Heart right ventricle (tissue), 16 donors: ENCODE measurements at regions of chr12 and their contacts with region 1.

Region 1: GRCh38 chr12:78787576-78787975 is 77.0 kb upstream of the SYT1 start:
- DNase-seq: no peak
- ATAC-seq: no peak
- H3K4me3 ChIP-seq: no peak overlapping the region
- H3K27ac ChIP-seq: no peak overlapping the region
- H3K4me1 ChIP-seq: no peaks in the 10 kb centered on the region
- H3K27me3 ChIP-seq: no peaks in the 10 kb centered on the region
- CTCF ChIP-seq: no peak

Region 2: DNA sequence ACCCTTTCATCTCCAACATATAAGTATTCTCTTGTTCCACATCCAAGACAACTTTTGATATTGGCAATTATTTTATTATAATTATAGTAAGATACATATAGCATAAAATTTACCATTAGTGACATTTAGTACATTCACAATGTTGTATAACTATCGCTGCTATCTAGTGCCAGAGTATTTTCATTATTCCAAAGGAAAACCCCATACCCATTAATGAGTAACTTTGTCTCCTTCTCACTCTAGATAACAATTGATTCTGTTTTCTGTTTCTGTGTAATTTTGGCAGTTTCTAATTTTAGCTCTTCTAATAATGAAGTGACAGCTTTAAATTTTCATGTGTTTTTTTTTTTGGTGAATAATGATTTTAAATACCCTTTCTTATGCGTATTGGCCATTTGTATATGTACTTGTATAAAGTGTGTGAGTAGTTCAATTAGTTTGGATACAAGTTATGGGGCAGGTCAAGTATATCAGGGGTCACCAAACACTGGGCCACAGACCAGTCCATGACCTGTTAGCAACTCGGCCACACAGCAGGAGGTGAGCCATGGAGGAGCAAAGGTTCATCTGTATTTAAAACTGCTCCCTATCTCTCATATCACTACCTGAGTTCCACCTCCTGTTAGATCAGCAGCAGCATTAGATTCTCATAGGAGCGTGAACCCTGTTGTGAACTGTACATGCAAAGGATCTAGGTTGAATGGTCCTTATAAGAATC is 20.2 kb before region 1 on chr12:
- intact Hi-C with region 1: loop called in 1 of 10 experiments (anchors 1 kb)
- DNase-seq: no peak
- ATAC-seq: no peak
- H3K4me3 ChIP-seq: no peak overlapping the region
- H3K27ac ChIP-seq: no peak overlapping the region
- H3K4me1 ChIP-seq: no peaks in the 10 kb centered on the region
- H3K27me3 ChIP-seq: no peaks in the 10 kb centered on the region
- CTCF ChIP-seq: no peak

Region 3: DNA sequence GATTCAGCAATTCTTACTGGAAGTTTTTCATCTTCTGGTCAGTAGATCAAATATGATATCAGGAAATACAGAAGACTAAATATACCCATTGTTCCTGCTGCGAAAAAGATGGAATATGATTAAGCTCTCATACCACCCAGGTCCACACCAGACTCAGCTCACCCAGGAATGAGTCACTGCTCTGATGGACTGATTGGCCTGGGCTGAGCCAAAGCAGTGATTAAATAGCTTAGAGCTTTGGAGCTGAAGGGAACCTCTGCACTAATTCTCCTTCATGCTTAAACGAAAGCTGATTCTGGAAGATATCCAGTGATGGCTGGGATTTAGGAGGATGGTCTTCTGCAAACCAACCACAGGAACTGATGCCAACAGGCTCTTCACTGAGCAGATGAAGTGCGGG is 15.0 kb after region 1 on chr12:
- intact Hi-C with region 1: no loop called
- DNase-seq: no peak
- ATAC-seq: no peak
- H3K4me3 ChIP-seq: no peak overlapping the region
- H3K27ac ChIP-seq: no peak overlapping the region
- H3K4me1 ChIP-seq: no peaks in the 10 kb centered on the region
- H3K27me3 ChIP-seq: no peaks in the 10 kb centered on the region
- CTCF ChIP-seq: no peak